ENCODE measurements at regions of chr7 and their contacts with region 1.

Region 1: GRCh38 chr7:39480901-39481300 is 85.3 kb upstream of the YAE1 start:
- DNase-seq: no peak
- H3K4me3 ChIP-seq: no peak overlapping the region
- H3K27me3 ChIP-seq: no peaks in the 10 kb centered on the region; the same call in 1 of the 2 replicates
- CTCF ChIP-seq: no peak

Region 2: GRCh38 chr7:39051707-39052106 is 429.2 kb before region 1 on chr7:
- CTCF ChIA-PET with region 1: no interaction called
- POLR2A ChIA-PET with region 1: no interaction called
- DNase-seq: no peak
- H3K4me3 ChIP-seq: no peak overlapping the region
- H3K27me3 ChIP-seq: no peaks in the 10 kb centered on the region
- CTCF ChIP-seq: no peak

Region 3: DNA sequence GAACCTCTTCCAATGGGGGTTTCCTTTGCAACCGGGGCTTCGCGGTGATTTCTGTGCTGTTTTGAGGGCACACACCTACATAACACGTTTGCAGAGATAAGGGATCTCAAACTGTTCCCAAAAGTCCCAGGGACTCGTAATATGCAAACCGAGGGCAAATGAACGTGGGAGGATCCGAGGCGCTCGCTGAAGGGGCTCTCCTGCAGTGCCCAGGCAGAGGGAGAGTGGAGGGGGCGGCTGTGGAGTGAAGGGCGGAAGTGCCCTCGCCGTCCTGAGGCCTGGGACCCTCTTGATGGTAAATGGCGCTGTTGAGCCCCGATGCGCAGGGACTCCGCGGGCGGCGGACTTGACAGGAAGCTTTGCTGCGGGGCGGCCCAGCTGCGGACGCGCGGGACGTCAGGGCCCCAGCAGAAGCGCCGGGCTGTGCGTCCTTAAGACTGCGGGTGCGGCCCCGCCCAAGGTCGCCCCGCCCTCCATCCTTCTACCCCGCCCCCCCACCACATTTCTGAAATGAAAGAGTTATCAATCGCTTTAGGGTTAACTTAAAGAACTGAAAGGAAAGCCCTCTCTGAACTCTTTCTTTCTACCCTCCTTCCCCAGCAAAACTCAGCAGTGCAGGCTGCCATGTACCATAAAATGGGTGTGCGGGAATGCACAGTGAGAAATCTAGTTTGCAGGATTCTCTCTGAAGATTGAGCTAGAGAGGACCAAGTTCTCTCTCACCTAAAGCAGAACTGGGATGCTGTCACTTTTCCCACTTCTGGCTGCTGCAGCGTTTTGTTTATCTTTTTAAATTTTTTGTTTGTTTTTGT is 66.5 kb before region 1 on chr7:
- CTCF ChIA-PET with region 1: no interaction called
- POLR2A ChIA-PET with region 1: interaction called, 10 read pairs
- DNase-seq: no peak
- H3K4me3 ChIP-seq: peak overlapping the region; percentile 61
- H3K27me3 ChIP-seq: peaks cover 4% of the 10 kb centered on the region; the same call in 1 of the 2 replicates
- CTCF ChIP-seq: no peak